PC-9 (cell line): ENCODE measurements at regions of chr16 and their contacts with region 1.

Region 1: DNA sequence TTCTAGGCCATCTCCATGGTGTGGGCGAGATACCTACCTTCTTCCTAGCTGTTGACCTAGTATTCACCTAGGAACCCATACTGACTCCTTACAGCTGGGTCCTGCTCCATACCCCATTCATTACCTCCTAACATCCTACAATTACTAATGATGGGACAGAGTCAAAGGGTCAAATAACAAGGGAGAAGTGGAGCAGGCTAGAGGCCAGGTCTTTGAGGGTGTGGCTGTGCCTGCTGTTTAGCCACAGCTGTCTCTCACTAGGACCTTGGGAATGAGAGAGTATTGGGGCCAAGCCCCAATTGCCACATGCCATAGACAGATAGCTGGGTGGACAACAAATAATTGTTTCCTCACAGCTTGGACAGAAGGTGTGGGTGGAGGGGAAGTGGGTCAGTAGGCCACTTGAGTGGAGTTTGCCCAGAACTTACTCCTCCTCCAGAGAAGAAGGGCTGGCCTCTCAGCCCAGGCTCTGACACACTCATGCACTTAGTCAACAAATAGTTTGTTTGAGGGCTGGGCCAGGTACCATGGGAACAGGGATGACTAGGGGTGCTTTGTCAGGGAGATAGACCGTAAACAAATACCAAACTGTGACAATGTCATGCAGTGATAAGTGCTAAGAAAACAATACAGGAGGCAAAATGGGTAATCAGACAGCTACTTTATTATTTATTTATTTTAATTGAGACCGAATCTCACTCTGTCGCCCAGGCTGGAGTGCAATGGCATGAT is 10.2 kb upstream of the CENPT start:
- DNase-seq: peak; percentile 88 to 98
- H3K4me3 ChIP-seq: no peak overlapping the region; the same call in 1 of the 2 replicates
- H3K27ac ChIP-seq: peak overlapping the region; percentile 69
- H3K4me1 ChIP-seq: peaks cover 52% of the 10 kb centered on the region
- H3K27me3 ChIP-seq: no peaks in the 10 kb centered on the region
- CTCF ChIP-seq: no peak

Region 2: DNA sequence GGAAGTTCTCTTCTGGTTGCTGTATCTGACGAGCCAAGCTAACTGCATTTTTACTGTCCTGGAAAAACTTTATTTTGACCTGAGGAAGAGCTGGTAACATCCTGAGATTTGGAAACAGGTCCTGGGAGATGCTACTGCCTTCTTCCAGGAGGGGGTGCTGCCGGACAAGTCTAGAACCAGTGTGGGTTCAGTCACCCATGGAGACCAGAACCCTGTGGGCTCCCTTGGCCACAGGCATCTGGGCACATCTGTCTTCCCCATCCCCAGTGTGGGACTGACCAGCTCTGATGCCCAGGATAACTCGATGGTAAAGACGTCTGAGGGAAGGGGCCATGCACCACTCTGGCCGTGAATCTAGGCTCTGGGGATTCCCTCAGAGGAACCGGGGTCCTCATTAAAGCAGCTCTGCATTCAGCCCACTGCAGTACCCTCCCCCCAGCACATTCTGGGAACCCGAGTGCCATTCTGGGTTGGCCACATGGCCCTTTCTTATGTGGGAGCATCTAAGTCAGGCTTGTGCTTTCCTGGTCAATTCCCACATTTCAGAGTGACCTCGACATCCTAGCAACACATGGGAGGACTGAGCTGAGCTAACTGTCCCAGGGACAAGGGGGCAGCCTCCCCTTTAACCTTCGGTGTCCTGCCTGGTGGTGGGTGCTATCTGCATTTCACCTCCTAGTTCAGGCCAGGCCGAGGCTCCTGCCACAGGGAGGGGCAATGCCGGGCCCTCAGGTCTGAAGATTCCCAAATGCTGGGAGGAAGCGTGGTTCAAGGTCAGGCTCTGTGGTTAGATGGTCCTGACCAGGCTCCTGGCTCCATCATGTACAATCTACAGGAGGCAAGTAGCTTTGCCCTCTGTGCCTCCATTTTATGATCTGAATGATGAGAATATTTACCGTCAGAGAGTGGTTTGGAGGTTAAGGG is 184.7 kb before region 1 on chr16:
- CTCF ChIA-PET with region 1: no interaction called
- POLR2A ChIA-PET with region 1: interaction called, 4 read pairs
- intact Hi-C with region 1: loop called (anchors 5 kb)
- DNase-seq: peak; percentile 39 to 67
- H3K4me3 ChIP-seq: no peak overlapping the region
- H3K27ac ChIP-seq: no peak overlapping the region
- H3K4me1 ChIP-seq: peaks cover 25% of the 10 kb centered on the region
- H3K27me3 ChIP-seq: no peaks in the 10 kb centered on the region
- CTCF ChIP-seq: peak; percentile 84

Region 3: GRCh38 chr16:67719048-67719777 is 138.5 kb before region 1 on chr16 and contains the start of gene GFOD2:
- CTCF ChIA-PET with region 1: no interaction called
- POLR2A ChIA-PET with region 1: no interaction called
- intact Hi-C with region 1: loop called (anchors 5 kb)
- DNase-seq: peak; percentile 77 to 96
- H3K4me3 ChIP-seq: peak within 1 kb of the TSS; percentile 71
- H3K27ac ChIP-seq: 0 out of 2 replicates have a peak within 1 kb of the TSS, but pooled peaks have one; percentile 4
- H3K4me1 ChIP-seq: peaks cover 24% of the 10 kb centered on the region
- H3K27me3 ChIP-seq: no peaks in the 10 kb centered on the region
- CTCF ChIP-seq: no peak
- total RNA-seq, gene GFOD2: 17.6 and 20.4 TPM in 2 replicates

Region 4: DNA sequence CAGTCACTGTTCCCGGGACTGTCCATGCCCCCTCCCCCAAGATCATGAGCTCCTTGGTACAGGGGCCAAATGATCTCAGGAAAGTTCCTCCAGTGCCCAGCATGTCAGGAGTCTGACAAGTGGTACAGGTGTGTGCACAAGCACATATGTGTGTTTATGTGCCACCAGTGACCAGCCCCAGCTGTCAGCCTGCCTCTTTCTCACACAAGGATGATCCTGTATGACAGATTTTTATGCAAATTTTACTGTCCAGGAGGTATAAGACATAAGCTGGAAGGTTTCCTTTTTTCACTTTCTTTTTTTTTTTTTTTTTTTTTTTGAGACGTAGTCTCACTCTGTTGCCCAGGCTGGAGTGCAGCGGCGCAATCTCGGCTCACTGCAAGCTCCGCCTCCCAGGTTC is 107.2 kb before region 1 on chr16:
- CTCF ChIA-PET with region 1: no interaction called
- POLR2A ChIA-PET with region 1: no interaction called
- intact Hi-C with region 1: no loop called
- DNase-seq: no peak
- H3K4me3 ChIP-seq: no peak overlapping the region
- H3K27ac ChIP-seq: no peak overlapping the region
- H3K4me1 ChIP-seq: no peaks in the 10 kb centered on the region
- H3K27me3 ChIP-seq: no peaks in the 10 kb centered on the region
- CTCF ChIP-seq: no peak

Region 5: DNA sequence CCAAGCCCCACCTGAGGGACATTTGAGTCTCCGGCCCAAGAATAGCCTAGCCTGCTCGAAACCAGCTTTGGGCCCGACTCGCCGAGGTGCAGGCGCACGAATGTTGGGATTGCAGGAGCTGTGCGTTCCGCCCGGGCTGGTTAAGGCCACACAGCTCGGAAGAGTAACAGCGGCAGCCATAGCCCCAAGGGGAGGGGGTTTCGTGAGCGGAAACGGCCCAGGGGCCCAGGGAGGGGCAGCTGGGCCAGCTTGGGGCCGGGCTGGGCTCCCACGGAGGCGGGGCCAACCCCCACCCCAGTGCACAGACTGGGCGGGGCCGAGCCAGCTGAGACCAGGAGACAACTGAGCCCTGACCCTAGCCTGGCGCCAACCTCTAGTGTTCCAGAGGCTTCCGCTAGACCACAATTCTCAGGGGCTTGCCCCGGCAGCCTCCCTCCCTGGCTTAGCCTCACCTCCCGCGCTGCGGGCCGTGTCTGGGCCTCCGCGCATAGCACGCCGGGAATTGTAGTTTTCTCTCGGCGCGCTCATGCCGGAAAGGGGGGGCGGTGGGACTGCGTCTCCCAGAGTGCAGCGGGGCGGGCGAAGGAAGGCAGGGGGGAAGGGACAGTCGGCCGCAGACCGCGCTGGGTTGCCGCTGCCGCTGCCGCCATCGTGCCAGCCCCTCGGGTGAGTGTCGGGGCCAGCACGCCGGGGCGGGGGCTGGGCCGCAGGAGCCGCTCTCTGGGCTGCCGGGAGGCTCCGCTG is 11.2 kb before region 1 on chr16 and contains the start of gene NUTF2:
- CTCF ChIA-PET with region 1: interaction called, 3 read pairs
- POLR2A ChIA-PET with region 1: interaction called, 8 read pairs
- intact Hi-C with region 1: loop called (anchors 2 kb)
- DNase-seq: peak; percentile 83 to 96
- H3K4me3 ChIP-seq: peak within 1 kb of the TSS; percentile 100
- H3K27ac ChIP-seq: peak within 1 kb of the TSS; percentile 70
- H3K4me1 ChIP-seq: peaks cover 45% of the 10 kb centered on the region
- H3K27me3 ChIP-seq: no peaks in the 10 kb centered on the region
- CTCF ChIP-seq: no peak
- total RNA-seq, gene NUTF2: 94.2 and 147 TPM in 2 replicates

Region 6: DNA sequence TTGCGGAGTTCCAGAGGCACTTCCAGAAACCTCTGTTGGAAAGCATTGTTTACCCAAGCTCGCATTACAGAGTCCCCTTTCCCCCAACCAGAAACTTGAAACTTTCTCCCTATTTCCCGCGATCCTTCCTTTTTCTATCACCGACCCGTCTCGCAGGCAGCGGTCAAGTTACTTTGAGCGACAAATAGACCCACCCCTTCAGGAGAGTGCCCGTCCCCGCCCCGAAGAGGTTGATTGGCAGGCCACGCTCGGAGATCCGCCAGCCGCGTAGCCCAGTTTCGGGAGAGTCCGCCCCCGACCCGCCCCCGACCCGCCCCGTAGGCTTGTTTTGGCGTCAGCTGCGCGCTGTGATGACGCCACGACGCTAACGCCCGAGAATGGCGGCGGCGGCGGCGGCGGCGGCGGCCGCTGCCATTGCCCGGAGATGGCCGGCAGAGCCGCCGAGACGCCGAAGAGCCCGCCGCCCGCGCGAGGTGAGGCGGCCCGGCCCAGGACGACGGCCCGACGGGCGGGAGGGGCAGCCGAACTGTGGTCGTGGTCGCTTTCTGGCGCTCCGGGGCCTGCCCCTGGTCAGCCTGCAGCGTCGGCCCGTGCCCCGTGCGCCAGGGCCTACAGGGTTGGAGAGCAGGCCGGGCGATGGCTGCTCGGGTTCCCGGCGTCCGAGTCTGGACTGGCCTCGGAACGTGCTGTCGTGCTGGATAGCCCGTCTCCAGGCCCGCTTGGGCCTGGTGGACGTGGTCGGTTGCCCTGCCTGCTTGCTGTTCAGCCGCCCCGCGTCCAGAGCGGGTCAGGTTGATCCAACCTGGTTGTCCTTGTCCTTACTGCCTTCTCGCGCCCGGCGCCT is 35.5 kb after region 1 on chr16 and contains the start of gene PSKH1:
- CTCF ChIA-PET with region 1: no interaction called
- POLR2A ChIA-PET with region 1: no interaction called
- intact Hi-C with region 1: no loop called
- DNase-seq: peak; percentile 88 to 91
- H3K4me3 ChIP-seq: peak within 1 kb of the TSS; percentile 98
- H3K27ac ChIP-seq: peak within 1 kb of the TSS; percentile 31
- H3K4me1 ChIP-seq: peaks cover 14% of the 10 kb centered on the region
- H3K27me3 ChIP-seq: no peaks in the 10 kb centered on the region
- CTCF ChIP-seq: no peak
- total RNA-seq, gene PSKH1: 25.8 and 28.4 TPM in 2 replicates